Endothelial cell of umbilical vein (primary cell): ENCODE measurements at regions of chr4 and their contacts with region 1.

Region 1: GRCh38 chr4:38856524-38857337 is at the start of gene TLR6:
- DNase-seq: peak; percentile 73
- H3K4me3 ChIP-seq: peak within 1 kb of the TSS in 1 of 3 experiments; percentile 34
- H3K27ac ChIP-seq: peak within 1 kb of the TSS; percentile 72
- H3K4me1 ChIP-seq: peaks cover 24% of the 10 kb centered on the region
- H3K27me3 ChIP-seq: peaks cover 0 to 2% of the 10 kb centered on the region in 2 experiments
- CTCF ChIP-seq: peak; percentile 51 to 60
- POLR2A ChIP-seq: no peak
- total RNA-seq, gene TLR6: 1.1 and 1.7 TPM in 2 replicates

Region 2: GRCh38 chr4:38062088-38062893 is 794.4 kb before region 1 on chr4:
- CTCF ChIA-PET with region 1: no interaction called
- POLR2A ChIA-PET with region 1: no interaction called
- dilution Hi-C with region 1: no loop called
- intact Hi-C with region 1: loop called (anchors 5 kb)
- DNase-seq: peak; percentile 82
- H3K4me3 ChIP-seq: peak overlapping the region in 2 of 3 experiments; percentile 8 to 64
- H3K27ac ChIP-seq: no peak overlapping the region
- H3K4me1 ChIP-seq: peaks cover 2% of the 10 kb centered on the region
- H3K27me3 ChIP-seq: no peaks in the 10 kb centered on the region
- CTCF ChIP-seq: peak; percentile 77 to 78
- POLR2A ChIP-seq: no peak

Region 3: GRCh38 chr4:38795087-38795486 is 61.6 kb before region 1 on chr4:
- CTCF ChIA-PET with region 1: interaction called, 15 read pairs
- POLR2A ChIA-PET with region 1: no interaction called
- dilution Hi-C with region 1: no loop called
- intact Hi-C with region 1: no loop called
- DNase-seq: no peak
- H3K4me3 ChIP-seq: no peak overlapping the region
- H3K27ac ChIP-seq: no peak overlapping the region
- H3K4me1 ChIP-seq: no peaks in the 10 kb centered on the region
- H3K27me3 ChIP-seq: no peaks in the 10 kb centered on the region
- CTCF ChIP-seq: no peak
- POLR2A ChIP-seq: no peak

Region 4: GRCh38 chr4:38804654-38805295 is 52.0 kb before region 1 on chr4 and contains the start of gene TLR1:
- CTCF ChIA-PET with region 1: interaction called, 7 read pairs
- POLR2A ChIA-PET with region 1: no interaction called
- dilution Hi-C with region 1: no loop called
- intact Hi-C with region 1: loop called (anchors 2 kb)
- DNase-seq: peak; percentile 89
- H3K4me3 ChIP-seq: peak within 1 kb of the TSS in 2 of 3 experiments; percentile 11 to 54
- H3K27ac ChIP-seq: peak within 1 kb of the TSS; percentile 30
- H3K4me1 ChIP-seq: peaks cover 19% of the 10 kb centered on the region
- H3K27me3 ChIP-seq: no peaks in the 10 kb centered on the region
- CTCF ChIP-seq: peak; percentile 15 to 36
- POLR2A ChIP-seq: no peak
- total RNA-seq, gene TLR1: 2.7 and 4.6 TPM in 2 replicates

Region 5: DNA sequence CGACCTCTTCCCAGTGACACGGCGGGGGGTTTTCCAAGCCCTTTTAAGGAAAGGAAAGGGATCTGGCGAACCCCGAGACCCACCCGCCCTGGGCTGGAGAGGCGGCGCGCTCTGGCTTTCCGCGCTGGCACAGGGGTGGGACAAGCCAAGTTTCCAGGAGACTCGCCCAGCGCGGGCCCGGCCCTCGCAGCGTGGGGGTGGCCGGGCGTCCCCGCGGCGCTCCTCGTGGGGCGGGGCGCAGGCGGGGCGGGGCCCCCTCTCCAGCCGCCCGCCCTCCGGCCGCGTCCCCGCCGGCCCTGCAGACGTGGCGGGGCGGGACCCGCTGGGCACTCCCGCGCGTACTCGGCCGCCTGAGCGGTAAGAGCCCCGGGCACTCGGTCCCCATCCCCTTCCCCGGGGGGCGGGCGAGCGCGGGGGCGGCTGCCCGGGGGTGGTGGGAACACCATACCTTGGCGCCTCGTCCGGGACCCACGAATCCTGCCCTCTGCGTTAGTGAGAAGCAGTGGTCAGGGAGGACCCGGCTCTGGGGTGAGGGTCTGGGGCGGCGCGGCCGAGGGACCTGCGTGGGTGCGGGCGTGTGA is 10.8 kb after region 1 on chr4 and contains the start of gene FAM114A1:
- CTCF ChIA-PET with region 1: interaction called, 4 read pairs
- POLR2A ChIA-PET with region 1: no interaction called
- dilution Hi-C with region 1: no loop called
- intact Hi-C with region 1: loop called (anchors 1 kb)
- DNase-seq: peak; percentile 80
- H3K4me3 ChIP-seq: peak within 1 kb of the TSS; percentile 19 to 90 (median 57)
- H3K27ac ChIP-seq: peak within 1 kb of the TSS; percentile 89
- H3K4me1 ChIP-seq: peaks cover 23% of the 10 kb centered on the region
- H3K27me3 ChIP-seq: peaks cover 0 to 2% of the 10 kb centered on the region in 2 experiments
- CTCF ChIP-seq: no peak
- POLR2A ChIP-seq: peak; percentile 32
- total RNA-seq, gene FAM114A1: 99.2 and 101 TPM in 2 replicates

Region 6: GRCh38 chr4:38889143-38889542 is 32.4 kb after region 1 on chr4:
- CTCF ChIA-PET with region 1: interaction called, 16 read pairs
- POLR2A ChIA-PET with region 1: no interaction called
- dilution Hi-C with region 1: no loop called
- intact Hi-C with region 1: loop called (anchors 1 kb)
- DNase-seq: peak; percentile 89
- H3K4me3 ChIP-seq: peak overlapping the region in 1 of 3 experiments; percentile 32
- H3K27ac ChIP-seq: peak overlapping the region; percentile 90
- H3K4me1 ChIP-seq: peaks cover 21% of the 10 kb centered on the region
- H3K27me3 ChIP-seq: no peaks in the 10 kb centered on the region
- CTCF ChIP-seq: no peak
- POLR2A ChIP-seq: no peak

Region 7: DNA sequence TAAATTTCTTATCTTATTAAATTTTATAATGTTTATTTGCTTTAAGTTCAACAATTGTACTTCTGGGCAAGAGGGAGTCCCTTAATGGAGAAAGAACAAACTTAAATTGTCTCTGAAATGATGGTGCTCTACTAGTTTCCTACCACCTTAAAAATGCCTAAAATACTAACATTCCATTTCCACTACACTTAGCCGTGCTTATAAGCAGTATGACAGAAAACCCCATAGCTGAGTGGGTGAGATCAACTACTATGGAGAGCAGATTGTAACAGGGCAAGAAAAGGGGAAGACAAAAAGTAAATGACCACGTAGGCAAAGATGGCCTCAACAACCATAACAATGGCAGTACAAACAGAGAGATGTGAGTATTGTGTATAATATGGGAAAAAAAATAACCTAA is 474.5 kb after region 1 on chr4:
- CTCF ChIA-PET with region 1: no interaction called
- POLR2A ChIA-PET with region 1: no interaction called
- dilution Hi-C with region 1: no loop called
- intact Hi-C with region 1: no loop called
- DNase-seq: no peak
- H3K4me3 ChIP-seq: no peak overlapping the region
- H3K27ac ChIP-seq: no peak overlapping the region
- H3K4me1 ChIP-seq: no peaks in the 10 kb centered on the region
- H3K27me3 ChIP-seq: no peaks in the 10 kb centered on the region
- CTCF ChIP-seq: no peak
- POLR2A ChIP-seq: no peak